ENCODE measurements at regions of chr7 and their contacts with region 1.

Region 1: DNA sequence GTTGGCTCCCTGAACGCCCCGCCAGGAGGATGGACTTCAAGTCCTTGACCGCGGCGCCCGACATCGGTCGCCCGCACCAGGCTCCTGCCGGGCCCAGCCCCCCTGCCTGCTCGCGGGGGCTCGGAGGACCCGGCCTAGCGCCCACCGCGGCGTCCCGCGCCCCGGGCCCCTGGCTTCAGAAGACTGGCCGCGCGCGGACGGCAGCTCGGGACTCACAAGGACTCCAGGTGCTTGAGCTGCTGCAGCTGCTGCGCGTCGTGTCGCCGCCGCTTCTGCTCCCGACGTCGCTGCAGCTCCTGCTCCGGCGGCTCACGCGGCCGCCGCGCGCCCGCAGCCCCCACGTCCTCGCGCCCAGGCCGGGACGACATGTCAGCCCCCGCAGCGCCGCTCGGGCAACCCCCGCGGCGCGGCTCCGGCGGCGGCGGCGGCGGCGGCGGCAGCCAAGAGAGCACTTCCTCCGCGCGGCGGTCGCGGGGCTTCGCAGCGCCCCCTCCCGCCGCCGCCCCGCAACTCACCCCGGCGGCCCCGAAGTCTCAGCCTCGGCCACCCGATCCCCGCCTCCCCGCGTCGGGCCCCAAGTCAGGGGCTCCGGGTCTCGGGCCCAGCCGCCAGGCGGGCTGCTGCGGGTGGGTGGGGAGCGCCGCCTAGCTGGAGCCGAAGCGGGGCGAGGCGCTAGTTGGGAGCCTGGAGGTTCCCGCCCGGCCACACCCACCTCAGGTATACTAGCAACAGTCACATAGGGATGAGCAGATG is at the start of gene RP9:
- DNase-seq: peak; percentile 52 to 93 (median 68)
- ATAC-seq: peak; percentile 88
- H3K4me3 ChIP-seq: peak within 1 kb of the TSS; percentile 78
- H3K4me3 Mint-ChIP-seq: peak within 1 kb of the TSS; percentile 90
- H3K27ac ChIP-seq: peak within 1 kb of the TSS in 1 of 2 donors; percentile 51
- H3K27ac Mint-ChIP-seq: peak within 1 kb of the TSS; percentile 68
- H3K4me1 ChIP-seq: peaks cover 34% of the 10 kb centered on the region
- H3K4me1 Mint-ChIP-seq: peaks cover 48% of the 10 kb centered on the region
- H3K27me3 ChIP-seq: peaks cover 2 to 3% of the 10 kb centered on the region in 2 experiments
- H3K27me3 Mint-ChIP-seq: peaks cover 19% of the 10 kb centered on the region
- CTCF ChIP-seq: peak; percentile 49
- total RNA-seq, gene RP9: 17.6 to 20.3 TPM

Region 2: DNA sequence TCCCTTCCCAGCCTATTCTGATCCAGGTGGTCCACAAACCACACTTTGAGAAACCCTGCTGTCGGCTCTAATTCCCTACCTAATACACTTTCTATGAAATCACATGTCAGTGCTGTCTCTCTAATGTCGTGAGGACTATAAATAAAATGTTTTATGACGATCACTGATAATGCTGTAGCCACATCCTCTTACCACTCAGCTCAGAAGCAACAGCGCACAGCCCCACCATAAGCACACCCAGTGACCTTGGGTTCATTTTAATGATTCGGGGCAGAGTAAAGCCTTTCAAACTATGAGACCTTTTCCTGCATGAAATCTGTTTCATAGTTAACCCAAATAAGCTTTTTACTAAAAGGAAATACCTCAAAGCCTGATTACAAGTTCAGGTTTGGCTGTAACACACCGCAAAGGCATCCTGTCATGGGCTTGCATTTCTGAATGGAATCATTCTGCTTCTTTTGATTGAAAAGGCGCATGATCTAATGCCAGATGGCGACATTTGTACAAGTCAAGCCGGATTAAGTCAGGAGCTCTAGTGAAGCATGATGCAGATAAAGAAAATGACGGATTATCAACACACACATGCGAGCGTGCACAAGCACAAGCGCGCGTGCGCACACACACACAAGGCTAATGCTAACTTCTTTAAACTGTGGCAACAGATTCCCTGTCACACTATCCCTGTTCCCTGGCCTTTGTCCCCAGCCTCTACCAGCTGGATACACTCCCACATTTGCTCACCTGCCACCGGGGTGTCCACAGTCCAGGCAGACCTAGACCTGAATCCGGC is 858.5 kb before region 1 on chr7:
- CTCF ChIA-PET with region 1: no interaction called
- POLR2A ChIA-PET with region 1: no interaction called
- intact Hi-C with region 1: no loop called
- DNase-seq: no peak
- ATAC-seq: no peak
- H3K4me3 ChIP-seq: no peak overlapping the region
- H3K4me3 Mint-ChIP-seq: no peak overlapping the region
- H3K27ac ChIP-seq: no peak overlapping the region
- H3K27ac Mint-ChIP-seq: no peak overlapping the region
- H3K4me1 ChIP-seq: no peaks in the 10 kb centered on the region
- H3K4me1 Mint-ChIP-seq: no peaks in the 10 kb centered on the region
- H3K27me3 ChIP-seq: no peaks in the 10 kb centered on the region
- H3K27me3 Mint-ChIP-seq: peaks cover 15% of the 10 kb centered on the region
- CTCF ChIP-seq: no peak

Region 3: GRCh38 chr7:32495298-32496176 is 613.6 kb before region 1 on chr7 and contains the start of gene AVL9:
- CTCF ChIA-PET with region 1: interaction called, 3 read pairs
- POLR2A ChIA-PET with region 1: no interaction called
- intact Hi-C with region 1: loop called (anchors 5 kb)
- DNase-seq: peak; percentile 97 to 100 (median 99)
- ATAC-seq: peak; percentile 93
- H3K4me3 ChIP-seq: peak within 1 kb of the TSS; percentile 86
- H3K4me3 Mint-ChIP-seq: peak within 1 kb of the TSS; percentile 92
- H3K27ac ChIP-seq: peak within 1 kb of the TSS; percentile 94 to 95
- H3K27ac Mint-ChIP-seq: peak within 1 kb of the TSS; percentile 94
- H3K4me1 ChIP-seq: peaks cover 22% of the 10 kb centered on the region
- H3K4me1 Mint-ChIP-seq: peaks cover 53% of the 10 kb centered on the region
- H3K27me3 ChIP-seq: no peaks in the 10 kb centered on the region
- H3K27me3 Mint-ChIP-seq: no peaks in the 10 kb centered on the region
- CTCF ChIP-seq: no peak
- total RNA-seq, gene AVL9: 23.3 to 25.4 TPM

Region 4: DNA sequence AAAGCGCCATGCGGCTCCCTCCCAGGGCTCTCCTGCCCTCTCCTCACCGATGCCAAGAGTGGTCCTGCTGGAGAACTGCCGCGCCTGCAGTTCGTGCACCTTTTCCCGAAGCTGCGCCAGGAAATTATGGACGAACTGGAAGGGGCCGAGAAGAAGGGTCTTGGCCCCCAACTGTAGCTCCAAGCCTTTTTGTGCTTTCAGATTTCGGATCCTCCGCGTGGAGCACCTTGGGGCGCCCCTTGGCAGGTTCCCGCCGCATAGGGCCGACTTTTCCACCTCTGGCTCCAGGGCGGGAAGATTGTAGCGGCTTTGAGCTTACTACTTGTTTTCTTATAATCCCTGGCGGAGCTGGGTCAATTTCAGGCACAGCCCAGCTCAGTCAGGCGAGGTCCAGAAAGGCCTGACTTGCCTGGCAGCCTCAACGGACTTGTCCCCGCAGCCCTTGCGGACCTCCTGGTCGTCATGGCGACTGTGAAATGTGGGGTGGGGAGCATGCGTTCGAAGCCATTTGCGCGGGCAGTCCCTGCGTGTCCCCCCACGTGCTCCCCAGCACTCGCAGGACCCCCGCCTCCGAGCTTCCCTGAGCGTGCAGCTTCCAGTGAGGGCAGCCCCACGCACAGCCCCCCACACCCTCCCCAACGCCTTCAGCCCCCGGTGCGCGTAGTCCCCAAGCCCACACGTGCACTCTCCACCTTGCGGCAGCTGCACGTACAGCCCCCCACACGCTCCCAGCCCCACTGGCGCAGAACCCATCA is 347.6 kb before region 1 on chr7:
- CTCF ChIA-PET with region 1: no interaction called
- POLR2A ChIA-PET with region 1: no interaction called
- intact Hi-C with region 1: loop called (anchors 2 kb)
- DNase-seq: peak in 1 of 14 experiments; percentile 8
- ATAC-seq: no peak
- H3K4me3 ChIP-seq: no peak overlapping the region
- H3K4me3 Mint-ChIP-seq: no peak overlapping the region
- H3K27ac ChIP-seq: no peak overlapping the region
- H3K27ac Mint-ChIP-seq: no peak overlapping the region
- H3K4me1 ChIP-seq: peaks cover 3% of the 10 kb centered on the region
- H3K4me1 Mint-ChIP-seq: peaks cover 11% of the 10 kb centered on the region
- H3K27me3 ChIP-seq: peaks cover 25 to 42% of the 10 kb centered on the region in 2 experiments
- H3K27me3 Mint-ChIP-seq: peaks cover 73% of the 10 kb centered on the region
- CTCF ChIP-seq: no peak

Region 5: DNA sequence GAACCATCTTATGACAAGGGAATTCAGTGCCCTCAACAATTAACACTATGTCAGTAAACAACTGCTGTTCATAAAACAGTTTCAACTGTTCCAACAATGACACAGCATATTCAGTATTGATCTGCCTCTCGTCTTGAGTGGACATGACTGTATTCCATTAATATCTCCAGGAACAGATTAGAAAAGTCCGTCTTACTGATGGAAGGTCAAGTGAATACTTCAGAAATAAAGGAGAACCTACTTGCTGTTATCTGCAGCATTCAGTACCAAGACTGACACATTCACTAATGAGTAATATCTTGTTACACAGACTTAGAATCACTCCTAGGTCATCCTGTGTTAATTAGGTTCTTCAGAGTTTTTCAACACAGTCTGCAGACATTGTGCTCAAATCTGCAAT is 229.7 kb before region 1 on chr7:
- CTCF ChIA-PET with region 1: no interaction called
- POLR2A ChIA-PET with region 1: no interaction called
- intact Hi-C with region 1: no loop called
- DNase-seq: no peak
- ATAC-seq: no peak
- H3K4me3 ChIP-seq: no peak overlapping the region
- H3K4me3 Mint-ChIP-seq: peak overlapping the region; percentile 3
- H3K27ac ChIP-seq: no peak overlapping the region
- H3K27ac Mint-ChIP-seq: peak overlapping the region; percentile 12
- H3K4me1 ChIP-seq: peaks cover 14% of the 10 kb centered on the region
- H3K4me1 Mint-ChIP-seq: peaks cover 74% of the 10 kb centered on the region
- H3K27me3 ChIP-seq: no peaks in the 10 kb centered on the region
- H3K27me3 Mint-ChIP-seq: no peaks in the 10 kb centered on the region
- CTCF ChIP-seq: no peak

Region 6: GRCh38 chr7:32942786-32943653 is 166.2 kb before region 1 on chr7:
- CTCF ChIA-PET with region 1: no interaction called
- POLR2A ChIA-PET with region 1: no interaction called
- intact Hi-C with region 1: loop called in 1 of 2 experiments (anchors 5 kb)
- DNase-seq: peak; percentile 31 to 84 (median 62)
- ATAC-seq: peak; percentile 89
- H3K4me3 ChIP-seq: peak overlapping the region; percentile 63
- H3K4me3 Mint-ChIP-seq: peak overlapping the region; percentile 85
- H3K27ac ChIP-seq: no peak overlapping the region
- H3K27ac Mint-ChIP-seq: no peak overlapping the region
- H3K4me1 ChIP-seq: peaks cover 11% of the 10 kb centered on the region
- H3K4me1 Mint-ChIP-seq: peaks cover 11% of the 10 kb centered on the region
- H3K27me3 ChIP-seq: no peaks in the 10 kb centered on the region
- H3K27me3 Mint-ChIP-seq: peaks cover 25% of the 10 kb centered on the region
- CTCF ChIP-seq: peak; percentile 69

Region 7: DNA sequence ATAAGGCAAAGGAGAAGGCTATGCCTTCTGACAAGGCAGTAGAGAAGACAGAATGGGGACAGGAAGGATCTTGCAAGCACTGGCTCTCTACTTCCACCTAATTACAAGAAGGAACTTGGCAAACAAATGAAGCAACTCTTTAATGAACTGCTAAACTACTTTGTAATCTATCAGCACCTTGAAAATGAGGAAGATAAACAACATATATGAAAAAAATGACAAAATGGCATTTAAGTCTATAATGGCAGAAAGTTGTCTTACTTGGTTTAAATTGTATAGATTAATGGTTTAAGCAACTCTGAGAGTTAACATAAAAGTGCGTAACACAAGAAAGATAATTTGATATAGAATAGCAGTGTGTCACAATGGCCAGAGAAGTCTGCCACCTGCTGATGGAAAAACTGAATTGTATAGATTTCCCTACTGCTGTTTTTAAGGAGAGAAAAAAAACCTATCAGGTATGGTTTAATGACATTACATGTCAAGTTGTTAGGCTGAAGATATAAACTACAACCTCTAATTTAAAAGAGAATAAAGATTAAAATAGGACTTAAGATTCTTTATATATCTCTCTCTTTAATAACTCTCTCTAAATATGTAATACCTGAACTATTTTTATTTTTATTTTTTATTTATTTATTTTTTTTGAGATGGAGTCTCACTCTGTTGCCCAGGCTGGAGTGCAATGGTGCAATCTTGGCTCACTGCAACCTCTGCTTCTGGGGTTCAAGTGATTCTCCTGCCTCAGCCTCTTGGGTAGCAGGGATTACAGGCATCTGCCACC is 58.5 kb before region 1 on chr7:
- CTCF ChIA-PET with region 1: interaction called, 32 read pairs
- POLR2A ChIA-PET with region 1: no interaction called
- intact Hi-C with region 1: no loop called
- DNase-seq: peak in 6 of 14 experiments; percentile 4 to 78 (median 60)
- ATAC-seq: peak; percentile 67
- H3K4me3 ChIP-seq: no peak overlapping the region
- H3K4me3 Mint-ChIP-seq: no peak overlapping the region
- H3K27ac ChIP-seq: no peak overlapping the region
- H3K27ac Mint-ChIP-seq: peak overlapping the region; percentile 60
- H3K4me1 ChIP-seq: peaks cover 16% of the 10 kb centered on the region
- H3K4me1 Mint-ChIP-seq: peaks cover 71% of the 10 kb centered on the region
- H3K27me3 ChIP-seq: no peaks in the 10 kb centered on the region
- H3K27me3 Mint-ChIP-seq: no peaks in the 10 kb centered on the region
- CTCF ChIP-seq: peak; percentile 79

Region 8: GRCh38 chr7:33128990-33129805 is 20.0 kb after region 1 on chr7 and contains the start of gene BBS9:
- CTCF ChIA-PET with region 1: interaction called, 10 read pairs
- POLR2A ChIA-PET with region 1: interaction called, 10 read pairs
- intact Hi-C with region 1: loop called in 1 of 2 experiments (anchors 1 kb)
- DNase-seq: peak; percentile 79 to 95 (median 87)
- ATAC-seq: peak; percentile 95
- H3K4me3 ChIP-seq: peak within 1 kb of the TSS; percentile 63
- H3K4me3 Mint-ChIP-seq: peak within 1 kb of the TSS; percentile 96
- H3K27ac ChIP-seq: peak within 1 kb of the TSS; percentile 54 to 79
- H3K27ac Mint-ChIP-seq: peak within 1 kb of the TSS; percentile 92
- H3K4me1 ChIP-seq: peaks cover 4% of the 10 kb centered on the region
- H3K4me1 Mint-ChIP-seq: peaks cover 34% of the 10 kb centered on the region
- H3K27me3 ChIP-seq: no peaks in the 10 kb centered on the region
- H3K27me3 Mint-ChIP-seq: peaks cover 4% of the 10 kb centered on the region
- CTCF ChIP-seq: no peak
- total RNA-seq, gene BBS9: 16.0 to 20.4 TPM

Measured in CD4-positive, alpha-beta T cell (primary cell).